Heart left ventricle (tissue), 16 donors: ENCODE measurements at regions of chr5 and their contacts with region 1.

Region 1: GRCh38 chr5:38809388-38810359 is 36.1 kb upstream of the OSMR start:
- DNase-seq: peak; percentile 79 to 86 (median 85)
- ATAC-seq: peak; percentile 76 to 92 (median 90)
- H3K4me3 ChIP-seq: no peak overlapping the region
- H3K27ac ChIP-seq: peak overlapping the region in 7 of 12 donors; percentile 4 to 60 (median 40)
- H3K4me1 ChIP-seq: peaks cover 0 to 44% (median 16%) of the 10 kb centered on the region in 12 donors
- H3K27me3 ChIP-seq: peaks cover 0 to 6% (median 0%) of the 10 kb centered on the region in 9 donors
- CTCF ChIP-seq: peak; percentile 72 to 93 (median 88)
- POLR2A ChIP-seq: no peak

Region 2: GRCh38 chr5:38208782-38209378 is 600.8 kb before region 1 on chr5:
- intact Hi-C with region 1: loop called in 3 of 10 experiments (anchors 5 to 10 kb)
- DNase-seq: peak in 2 of 5 donors; percentile 17 to 32
- ATAC-seq: peak in 3 of 4 donors; percentile 34 to 46 (median 39)
- H3K4me3 ChIP-seq: no peak overlapping the region
- H3K27ac ChIP-seq: no peak overlapping the region
- H3K4me1 ChIP-seq: no peaks in the 10 kb centered on the region
- H3K27me3 ChIP-seq: peaks cover 0 to 9% (median 0%) of the 10 kb centered on the region in 9 donors
- CTCF ChIP-seq: peak; percentile 7 to 63 (median 44)
- POLR2A ChIP-seq: no peak

Region 3: DNA sequence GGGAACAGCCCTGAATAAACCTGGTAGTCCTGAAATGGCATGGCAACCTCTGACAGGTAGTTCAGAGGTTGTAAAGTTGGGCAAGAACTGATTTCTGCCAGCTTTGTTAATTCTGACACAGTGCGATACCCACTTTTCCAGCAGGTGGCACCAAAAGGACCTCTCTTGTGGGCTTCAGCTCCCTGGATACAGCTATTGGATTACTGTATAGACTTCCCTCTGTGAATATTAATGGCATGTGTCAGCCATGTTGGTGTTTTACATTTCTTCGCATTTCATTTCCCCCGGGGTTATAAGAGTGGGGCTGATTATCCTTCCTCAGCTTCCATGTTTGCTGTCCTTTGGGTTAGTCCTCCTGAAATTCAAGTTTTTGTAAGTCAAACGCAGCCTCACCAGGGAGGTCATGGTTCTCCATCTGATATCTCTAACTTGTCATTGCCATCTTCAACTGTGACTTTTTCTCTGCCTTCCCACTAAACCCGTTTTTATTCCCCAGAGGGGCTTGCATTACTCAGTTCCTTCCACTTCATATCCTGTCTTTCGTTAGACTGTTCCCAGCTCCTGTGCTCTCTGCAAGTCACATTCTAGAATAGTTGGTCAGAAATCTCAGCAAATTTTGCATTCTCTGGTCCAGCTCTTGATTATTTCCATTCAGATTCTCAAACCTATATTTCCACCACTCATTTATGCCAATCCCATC is 388.8 kb before region 1 on chr5:
- intact Hi-C with region 1: loop called in 5 of 10 experiments (anchors 1 to 5 kb)
- DNase-seq: peak in 4 of 5 donors; percentile 29 to 55 (median 46)
- ATAC-seq: peak in 3 of 4 donors; percentile 55 to 76 (median 68)
- H3K4me3 ChIP-seq: no peak overlapping the region
- H3K27ac ChIP-seq: no peak overlapping the region
- H3K4me1 ChIP-seq: peaks cover 0 to 9% (median 0%) of the 10 kb centered on the region in 12 donors
- H3K27me3 ChIP-seq: peaks cover 0 to 2% (median 0%) of the 10 kb centered on the region in 9 donors
- CTCF ChIP-seq: peak; percentile 56 to 83 (median 68)
- POLR2A ChIP-seq: no peak

Region 4: GRCh38 chr5:38666668-38667498 is 142.8 kb before region 1 on chr5:
- intact Hi-C with region 1: loop called in 7 of 10 experiments (anchors 2 to 10 kb)
- DNase-seq: peak; percentile 32 to 63 (median 51)
- ATAC-seq: peak; percentile 92 to 96 (median 94)
- H3K4me3 ChIP-seq: no peak overlapping the region
- H3K27ac ChIP-seq: peak overlapping the region in 3 of 12 donors; percentile 5 to 50 (median 50)
- H3K4me1 ChIP-seq: peaks cover 0 to 37% (median 13%) of the 10 kb centered on the region in 12 donors
- H3K27me3 ChIP-seq: no peaks in the 10 kb centered on the region
- CTCF ChIP-seq: peak; percentile 36 to 87 (median 72)
- POLR2A ChIP-seq: no peak

Region 5: GRCh38 chr5:38672059-38672788 is 137.4 kb before region 1 on chr5:
- intact Hi-C with region 1: loop called in 7 of 10 experiments (anchors 2 to 10 kb)
- DNase-seq: no peak
- ATAC-seq: no peak
- H3K4me3 ChIP-seq: no peak overlapping the region
- H3K27ac ChIP-seq: no peak overlapping the region
- H3K4me1 ChIP-seq: peaks cover 0 to 3% (median 0%) of the 10 kb centered on the region in 12 donors
- H3K27me3 ChIP-seq: no peaks in the 10 kb centered on the region
- CTCF ChIP-seq: no peak
- POLR2A ChIP-seq: no peak

Region 6: DNA sequence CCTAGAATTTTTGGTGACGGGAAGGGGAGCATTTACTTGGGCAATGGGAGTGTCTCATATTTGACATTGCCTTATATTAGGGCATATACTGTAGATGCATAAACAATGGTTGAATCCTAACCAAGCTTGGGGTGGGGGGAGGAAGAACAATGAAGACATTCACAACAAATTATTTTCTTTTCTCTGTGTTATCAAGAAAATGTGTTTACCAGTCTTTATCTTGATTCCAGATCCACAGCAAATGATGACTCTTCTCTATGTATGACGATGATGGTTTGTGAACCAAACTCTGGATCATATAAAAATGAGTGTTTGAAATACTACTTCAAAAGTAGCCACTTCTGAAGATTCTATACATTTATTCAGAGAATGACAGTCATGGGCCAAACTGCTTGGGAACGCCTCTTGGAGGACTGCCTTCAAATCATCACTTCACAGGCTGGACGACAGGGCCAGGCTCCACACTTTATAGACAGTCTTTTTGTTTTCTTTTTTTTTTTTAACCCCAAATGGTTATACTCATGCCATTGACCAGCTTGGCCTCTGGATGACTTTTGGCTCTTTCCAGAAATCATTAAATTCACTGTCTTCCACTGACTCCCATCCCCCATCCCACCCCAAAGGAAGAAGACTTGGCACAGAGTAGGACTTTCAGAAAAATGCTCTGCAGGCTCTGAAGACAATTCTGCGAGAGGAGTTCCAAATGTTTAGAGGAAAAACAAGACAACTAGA is 129.4 kb before region 1 on chr5:
- intact Hi-C with region 1: loop called in 2 of 10 experiments (anchors 10 kb)
- DNase-seq: no peak
- ATAC-seq: no peak
- H3K4me3 ChIP-seq: no peak overlapping the region
- H3K27ac ChIP-seq: no peak overlapping the region
- H3K4me1 ChIP-seq: peaks cover 0 to 5% (median 0%) of the 10 kb centered on the region in 12 donors
- H3K27me3 ChIP-seq: no peaks in the 10 kb centered on the region
- CTCF ChIP-seq: no peak
- POLR2A ChIP-seq: no peak

Region 7: GRCh38 chr5:38948501-38948900 is 138.8 kb after region 1 on chr5:
- intact Hi-C with region 1: no loop called
- DNase-seq: no peak
- ATAC-seq: no peak
- H3K4me3 ChIP-seq: no peak overlapping the region
- H3K27ac ChIP-seq: no peak overlapping the region
- H3K4me1 ChIP-seq: no peaks in the 10 kb centered on the region
- H3K27me3 ChIP-seq: no peaks in the 10 kb centered on the region
- CTCF ChIP-seq: no peak
- POLR2A ChIP-seq: no peak